Heart left ventricle (tissue), 16 donors: ENCODE measurements at regions of chr7 and their contacts with region 1.

Region 1: GRCh38 chr7:94087664-94088352 is 83.7 kb upstream of the BET1 start:
- DNase-seq: peak in 2 of 5 donors; percentile 29 to 32
- ATAC-seq: peak; percentile 47 to 76 (median 67)
- H3K4me3 ChIP-seq: peak overlapping the region in 9 of 12 donors; percentile 15 to 47 (median 22)
- H3K27ac ChIP-seq: no peak overlapping the region
- H3K4me1 ChIP-seq: peaks cover 0 to 10% (median 0%) of the 10 kb centered on the region in 12 donors
- H3K27me3 ChIP-seq: peaks cover 0 to 5% (median 0%) of the 10 kb centered on the region in 9 donors
- CTCF ChIP-seq: peak; percentile 63 to 87 (median 78)
- POLR2A ChIP-seq: no peak

Region 2: DNA sequence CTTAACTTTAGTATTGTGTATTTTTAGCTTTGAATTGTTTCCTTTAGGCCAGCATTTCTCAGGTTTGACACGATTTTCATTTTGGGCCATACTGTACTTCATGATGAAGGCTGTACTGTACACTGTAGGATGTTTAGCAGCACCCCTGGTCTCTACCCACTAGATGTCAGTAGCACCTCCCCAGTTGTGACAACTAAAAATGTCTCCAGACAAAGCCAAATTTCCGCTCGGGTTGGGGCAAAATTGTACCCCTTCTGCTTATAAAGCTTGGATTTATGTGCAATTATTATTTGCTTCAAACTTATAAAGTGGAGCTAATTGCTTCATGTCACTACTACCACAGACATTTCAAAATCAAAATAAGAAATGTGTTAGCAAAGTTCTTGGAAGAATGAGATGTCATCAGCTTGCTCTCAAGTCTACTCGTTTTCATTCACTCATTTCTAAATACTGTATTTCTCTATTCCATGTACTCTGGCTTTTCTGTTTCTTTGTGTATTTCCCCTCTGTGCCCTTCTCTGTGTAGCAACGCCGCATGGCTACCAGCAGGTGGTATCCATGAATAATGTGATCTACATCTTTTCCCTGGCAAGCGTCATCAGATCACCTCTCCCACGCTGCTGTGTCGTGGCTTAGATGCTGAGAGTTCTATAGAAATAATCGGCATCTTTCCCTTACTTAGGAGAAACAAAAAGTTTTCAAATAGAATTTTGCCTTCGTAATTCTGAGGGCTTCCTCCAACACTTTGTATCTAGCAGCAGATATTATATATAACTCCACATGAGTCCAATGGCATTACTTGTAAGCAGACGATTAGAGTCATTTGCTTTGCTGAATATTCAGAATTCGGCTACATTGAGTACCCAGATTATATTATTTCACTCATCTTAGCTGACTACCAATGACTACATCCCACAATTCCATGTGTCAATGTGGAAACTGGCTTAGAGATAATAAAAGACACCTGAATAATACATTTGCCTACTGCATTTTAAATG is 465.5 kb before region 1 on chr7:
- intact Hi-C with region 1: loop called in 1 of 10 experiments (anchors 10 kb)
- DNase-seq: peak in 1 of 5 donors; percentile 19
- ATAC-seq: peak in 3 of 4 donors; percentile 48 to 73 (median 54)
- H3K4me3 ChIP-seq: no peak overlapping the region
- H3K27ac ChIP-seq: no peak overlapping the region
- H3K4me1 ChIP-seq: peaks cover 0 to 4% (median 0%) of the 10 kb centered on the region in 12 donors
- H3K27me3 ChIP-seq: no peaks in the 10 kb centered on the region
- CTCF ChIP-seq: peak in 7 of 12 donors; percentile 25 to 49 (median 28)
- POLR2A ChIP-seq: no peak

Region 3: DNA sequence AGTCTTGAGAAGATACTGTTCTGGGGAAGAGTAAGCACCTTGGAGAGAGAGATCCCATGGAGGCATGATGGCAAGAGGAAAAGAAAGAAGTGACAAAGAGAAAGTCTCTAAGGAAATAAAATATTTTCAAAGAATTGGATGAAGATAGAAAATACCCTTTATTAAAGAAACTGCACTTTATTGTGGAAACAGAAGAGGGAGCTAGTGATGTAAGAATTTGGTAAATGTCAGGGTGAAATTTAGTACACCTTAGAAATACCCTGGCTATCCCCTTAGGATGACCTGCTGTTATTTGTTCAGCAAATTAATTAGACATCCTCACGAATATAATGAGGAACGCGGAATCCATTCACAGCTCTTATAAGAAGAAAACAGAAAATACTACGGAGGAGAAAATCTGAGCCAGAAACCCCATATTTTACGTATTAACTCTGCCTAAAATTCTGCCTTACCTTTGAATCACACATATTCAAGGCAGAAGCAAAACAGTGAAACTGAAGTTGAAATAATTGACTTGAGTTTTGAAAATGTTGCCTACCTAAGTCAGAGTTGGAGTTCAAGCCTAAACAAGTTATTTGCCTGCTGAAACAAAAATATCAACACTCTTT is 288.0 kb before region 1 on chr7:
- intact Hi-C with region 1: loop called in 3 of 10 experiments (anchors 5 kb)
- DNase-seq: no peak
- ATAC-seq: no peak
- H3K4me3 ChIP-seq: no peak overlapping the region
- H3K27ac ChIP-seq: no peak overlapping the region
- H3K4me1 ChIP-seq: no peaks in the 10 kb centered on the region
- H3K27me3 ChIP-seq: no peaks in the 10 kb centered on the region
- CTCF ChIP-seq: peak in 10 of 12 donors; percentile 29 to 60 (median 38)
- POLR2A ChIP-seq: no peak

Region 4: GRCh38 chr7:94004024-94004951 is 83.5 kb before region 1 on chr7 and contains the start of gene BET1:
- intact Hi-C with region 1: loop called in 2 of 10 experiments (anchors 5 to 10 kb)
- DNase-seq: peak; percentile 94 to 97 (median 96)
- ATAC-seq: peak; percentile 98 to 100 (median 100)
- H3K4me3 ChIP-seq: peak within 1 kb of the TSS; percentile 70 to 91 (median 87)
- H3K27ac ChIP-seq: peak within 1 kb of the TSS; percentile 47 to 93 (median 86)
- H3K4me1 ChIP-seq: peaks cover 0 to 29% (median 19%) of the 10 kb centered on the region in 12 donors
- H3K27me3 ChIP-seq: peaks cover 0 to 5% (median 0%) of the 10 kb centered on the region in 9 donors
- CTCF ChIP-seq: no peak
- POLR2A ChIP-seq: peak in 1 of 2 donors; percentile 74
- total RNA-seq, gene BET1: 8.1 to 16.5 (median 11.5) TPM